Thyroid gland (tissue), 4 donors: ENCODE measurements at regions of chr1 and their contacts with region 1.

Region 1: GRCh38 chr1:225973158-225973557 is 26.0 kb downstream of the SDE2 start:
- DNase-seq: no peak
- H3K4me3 ChIP-seq: no peak overlapping the region
- H3K27ac ChIP-seq: no peak overlapping the region
- H3K4me1 ChIP-seq: no peaks in the 10 kb centered on the region
- H3K27me3 ChIP-seq: no peaks in the 10 kb centered on the region
- CTCF ChIP-seq: no peak
- POLR2A ChIP-seq: no peak

Region 2: GRCh38 chr1:225923692-225924555 is 49.2 kb before region 1 on chr1 and contains the start of gene PYCR2:
- intact Hi-C with region 1: loop called (anchors 5 kb)
- DNase-seq: peak; percentile 95 to 96
- H3K4me3 ChIP-seq: peak within 1 kb of the TSS; percentile 55 to 93 (median 83)
- H3K27ac ChIP-seq: peak within 1 kb of the TSS; percentile 74 to 83 (median 82)
- H3K4me1 ChIP-seq: peaks cover 6 to 12% of the 10 kb centered on the region in 2 donors
- H3K27me3 ChIP-seq: no peaks in the 10 kb centered on the region
- CTCF ChIP-seq: no peak
- POLR2A ChIP-seq: peak; percentile 37 to 94
- total RNA-seq, gene PYCR2: 38.8 to 55.0 (median 41.0) TPM

Region 3: GRCh38 chr1:226009650-226010044 is 36.5 kb after region 1 on chr1:
- intact Hi-C with region 1: no loop called
- DNase-seq: no peak
- H3K4me3 ChIP-seq: no peak overlapping the region
- H3K27ac ChIP-seq: no peak overlapping the region
- H3K4me1 ChIP-seq: no peaks in the 10 kb centered on the region
- H3K27me3 ChIP-seq: no peaks in the 10 kb centered on the region
- CTCF ChIP-seq: no peak
- POLR2A ChIP-seq: no peak